Endothelial cell of umbilical vein (primary cell): ENCODE measurements at regions of chr9 and their contacts with region 1.

Region 1: DNA sequence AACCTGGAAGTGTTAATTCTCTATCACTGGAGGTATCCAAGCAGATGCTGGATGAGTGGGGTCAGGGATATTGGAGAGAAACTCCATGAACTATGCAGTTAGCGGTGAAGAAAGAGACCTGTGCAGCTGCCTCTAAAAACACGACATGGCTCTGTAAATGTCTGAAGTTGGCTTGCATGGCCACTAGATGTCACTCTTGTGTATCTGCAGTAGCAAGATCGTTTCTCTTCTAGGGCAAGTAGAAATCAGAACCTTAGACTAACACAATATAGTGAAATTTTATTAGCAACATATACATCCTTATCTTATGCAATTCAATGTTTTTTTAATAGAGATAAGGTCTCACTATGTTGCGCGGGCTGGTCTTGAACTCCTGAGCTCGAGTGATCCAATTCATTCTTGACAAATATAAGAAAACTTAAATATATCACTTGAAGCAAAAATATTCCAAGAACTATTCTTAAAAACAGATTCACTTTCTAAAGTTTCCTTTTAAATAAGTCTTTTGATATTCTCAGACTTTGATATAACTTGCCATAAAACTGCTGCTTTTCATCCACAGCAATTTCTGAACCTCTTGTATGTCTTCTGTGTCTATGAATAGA is 2.9 kb downstream of the OR2S2 start:
- DNase-seq: peak; percentile 79
- H3K4me3 ChIP-seq: no peak overlapping the region
- H3K27ac ChIP-seq: no peak overlapping the region
- H3K4me1 ChIP-seq: peaks cover 19% of the 10 kb centered on the region
- H3K27me3 ChIP-seq: no peaks in the 10 kb centered on the region
- CTCF ChIP-seq: peak; percentile 71 to 75
- POLR2A ChIP-seq: no peak

Region 2: DNA sequence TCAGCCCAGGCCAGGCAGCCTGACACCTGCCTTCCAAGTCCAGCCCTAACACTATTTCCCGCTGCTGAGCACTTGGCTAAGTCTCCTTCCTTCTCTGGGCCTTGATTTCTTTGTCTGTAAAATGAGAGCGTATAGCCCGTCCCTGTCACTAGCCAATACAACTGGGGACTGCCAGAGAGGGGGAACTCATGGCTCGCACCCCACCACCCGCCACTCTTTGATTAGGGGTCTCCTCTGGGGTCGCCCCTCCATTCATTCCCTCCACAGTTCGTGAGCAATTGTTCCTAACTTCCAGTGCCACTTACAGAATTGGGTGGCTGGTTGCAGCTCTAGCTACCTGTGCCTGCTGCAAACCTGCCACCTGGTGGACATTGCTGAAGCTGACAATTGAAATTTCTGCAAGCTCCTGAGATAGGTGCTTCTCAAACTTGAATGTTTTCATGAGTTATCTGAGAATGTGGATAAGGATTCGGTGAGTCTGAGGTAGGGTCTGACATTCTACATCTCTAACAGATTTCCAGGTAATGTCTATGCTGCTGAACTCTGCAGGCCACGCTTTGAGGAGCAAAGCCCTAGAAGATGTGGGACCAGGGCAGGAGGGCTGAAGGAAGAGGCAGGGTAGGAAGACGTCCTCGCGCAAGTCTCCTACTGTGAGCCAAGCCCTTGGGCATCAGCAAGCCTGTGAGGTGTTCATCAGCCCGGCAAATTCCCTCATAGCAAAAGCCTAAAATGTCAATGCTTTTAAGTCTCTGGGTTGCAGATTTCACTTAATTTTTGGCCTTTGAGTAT is 68.4 kb after region 1 on chr9:
- CTCF ChIA-PET with region 1: interaction called, 83 read pairs
- POLR2A ChIA-PET with region 1: no interaction called
- dilution Hi-C with region 1: no loop called
- intact Hi-C with region 1: loop called (anchors 1 kb)
- DNase-seq: peak; percentile 71
- H3K4me3 ChIP-seq: no peak overlapping the region
- H3K27ac ChIP-seq: no peak overlapping the region
- H3K4me1 ChIP-seq: no peaks in the 10 kb centered on the region
- H3K27me3 ChIP-seq: no peaks in the 10 kb centered on the region
- CTCF ChIP-seq: peak; percentile 71 to 79
- POLR2A ChIP-seq: no peak

Region 3: DNA sequence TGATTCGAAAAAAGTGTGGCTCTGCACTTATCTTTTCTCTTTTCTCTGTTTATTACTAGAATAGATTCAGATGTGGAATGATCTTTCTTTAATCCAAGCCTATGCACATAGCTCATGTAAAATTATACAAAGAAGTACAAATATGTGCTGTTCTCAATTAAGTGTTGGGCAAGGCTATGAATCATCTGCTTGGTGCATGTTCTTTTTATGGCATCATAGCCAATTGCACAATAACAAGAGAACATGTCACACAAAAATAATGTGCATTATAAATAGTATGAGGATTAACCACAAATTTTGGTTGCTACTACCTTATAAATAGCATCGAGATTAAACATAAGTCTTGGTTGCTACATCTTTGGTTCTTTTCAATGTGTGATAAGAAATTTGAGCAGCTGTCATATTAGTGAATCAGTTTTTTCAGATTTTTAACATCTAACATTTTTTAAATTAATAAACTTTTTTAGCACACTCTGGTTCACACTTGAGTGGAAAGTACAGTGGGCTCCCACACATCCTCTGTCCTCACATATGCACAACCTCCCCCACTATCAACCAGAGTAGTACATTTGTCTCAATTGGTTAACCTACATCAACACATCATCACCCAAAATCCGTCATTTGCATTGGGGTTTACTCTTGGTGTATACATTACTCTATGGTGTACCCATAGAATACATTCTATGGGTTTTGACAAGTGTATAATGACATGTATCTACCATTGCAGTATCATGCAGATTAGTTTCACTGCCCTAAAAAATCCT is 74.9 kb after region 1 on chr9:
- CTCF ChIA-PET with region 1: interaction called, 10 read pairs
- POLR2A ChIA-PET with region 1: no interaction called
- dilution Hi-C with region 1: no loop called
- intact Hi-C with region 1: no loop called
- DNase-seq: no peak
- H3K4me3 ChIP-seq: no peak overlapping the region
- H3K27ac ChIP-seq: no peak overlapping the region
- H3K4me1 ChIP-seq: no peaks in the 10 kb centered on the region
- H3K27me3 ChIP-seq: no peaks in the 10 kb centered on the region
- CTCF ChIP-seq: no peak
- POLR2A ChIP-seq: no peak

Region 4: GRCh38 chr9:36738318-36738976 is 783.4 kb after region 1 on chr9:
- CTCF ChIA-PET with region 1: no interaction called
- POLR2A ChIA-PET with region 1: no interaction called
- dilution Hi-C with region 1: no loop called
- intact Hi-C with region 1: no loop called
- DNase-seq: no peak
- H3K4me3 ChIP-seq: no peak overlapping the region
- H3K27ac ChIP-seq: no peak overlapping the region
- H3K4me1 ChIP-seq: peaks cover 3% of the 10 kb centered on the region
- H3K27me3 ChIP-seq: peaks cover 9 to 26% of the 10 kb centered on the region in 2 experiments
- CTCF ChIP-seq: no peak
- POLR2A ChIP-seq: no peak